ENCODE measurements at regions of chr6 and their contacts with region 1.

Region 1: GRCh38 chr6:26401987-26402658 is at the start of gene BTN3A1:
- DNase-seq: peak; percentile 39 to 80
- H3K4me3 ChIP-seq: peak within 1 kb of the TSS; percentile 64 to 71
- H3K27ac ChIP-seq: peak within 1 kb of the TSS; percentile 71 to 82
- H3K4me1 ChIP-seq: peaks cover 0 to 7% of the 10 kb centered on the region in 2 donors
- H3K27me3 ChIP-seq: no peaks in the 10 kb centered on the region
- CTCF ChIP-seq: no peak
- total RNA-seq, gene BTN3A1: 7.7 TPM

Region 2: DNA sequence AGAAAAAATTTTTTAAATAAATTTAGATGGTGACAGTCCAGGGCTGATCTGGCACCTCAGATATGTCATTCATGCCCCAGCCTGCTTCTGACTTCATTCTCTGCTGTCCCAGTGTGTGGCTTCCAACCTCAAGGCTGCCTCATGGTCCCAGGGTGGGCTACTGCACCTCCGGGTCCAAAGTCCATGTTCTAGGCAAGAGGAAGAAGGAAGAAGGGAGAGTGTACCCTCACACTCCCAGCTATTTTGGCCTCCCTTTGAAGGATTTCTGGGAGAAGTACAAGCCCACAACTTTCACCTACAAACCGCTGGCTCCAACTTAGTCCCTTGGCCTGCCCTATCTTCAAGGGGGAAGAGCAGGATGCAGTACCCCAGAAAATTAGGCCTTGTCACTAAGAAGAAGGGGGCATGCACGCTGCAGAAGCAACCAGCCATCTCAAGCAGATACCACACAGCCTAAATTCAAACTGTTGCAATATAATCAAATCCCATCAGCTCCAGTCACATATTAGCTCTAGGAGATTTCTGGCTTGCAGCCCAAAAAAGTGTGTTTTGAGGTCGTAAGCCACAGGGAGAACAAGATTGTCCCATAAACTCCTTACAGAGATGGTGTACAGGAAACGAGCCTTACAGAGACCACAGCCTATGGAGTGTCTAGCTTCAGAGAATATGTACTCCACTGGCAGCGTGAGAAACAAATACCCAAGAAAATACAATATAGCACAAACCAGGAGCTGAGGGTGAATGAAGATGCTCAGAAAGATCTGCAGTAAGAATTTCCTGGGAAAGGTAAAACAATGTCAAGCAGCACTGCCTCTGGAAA is 38.0 kb before region 1 on chr6:
- intact Hi-C with region 1: loop called (anchors 1 kb)
- DNase-seq: no peak
- H3K4me3 ChIP-seq: peak overlapping the region; percentile 72 to 79
- H3K27ac ChIP-seq: peak overlapping the region; percentile 64 to 83
- H3K4me1 ChIP-seq: peaks cover 0 to 8% of the 10 kb centered on the region in 2 donors
- H3K27me3 ChIP-seq: no peaks in the 10 kb centered on the region
- CTCF ChIP-seq: no peak

Region 3: DNA sequence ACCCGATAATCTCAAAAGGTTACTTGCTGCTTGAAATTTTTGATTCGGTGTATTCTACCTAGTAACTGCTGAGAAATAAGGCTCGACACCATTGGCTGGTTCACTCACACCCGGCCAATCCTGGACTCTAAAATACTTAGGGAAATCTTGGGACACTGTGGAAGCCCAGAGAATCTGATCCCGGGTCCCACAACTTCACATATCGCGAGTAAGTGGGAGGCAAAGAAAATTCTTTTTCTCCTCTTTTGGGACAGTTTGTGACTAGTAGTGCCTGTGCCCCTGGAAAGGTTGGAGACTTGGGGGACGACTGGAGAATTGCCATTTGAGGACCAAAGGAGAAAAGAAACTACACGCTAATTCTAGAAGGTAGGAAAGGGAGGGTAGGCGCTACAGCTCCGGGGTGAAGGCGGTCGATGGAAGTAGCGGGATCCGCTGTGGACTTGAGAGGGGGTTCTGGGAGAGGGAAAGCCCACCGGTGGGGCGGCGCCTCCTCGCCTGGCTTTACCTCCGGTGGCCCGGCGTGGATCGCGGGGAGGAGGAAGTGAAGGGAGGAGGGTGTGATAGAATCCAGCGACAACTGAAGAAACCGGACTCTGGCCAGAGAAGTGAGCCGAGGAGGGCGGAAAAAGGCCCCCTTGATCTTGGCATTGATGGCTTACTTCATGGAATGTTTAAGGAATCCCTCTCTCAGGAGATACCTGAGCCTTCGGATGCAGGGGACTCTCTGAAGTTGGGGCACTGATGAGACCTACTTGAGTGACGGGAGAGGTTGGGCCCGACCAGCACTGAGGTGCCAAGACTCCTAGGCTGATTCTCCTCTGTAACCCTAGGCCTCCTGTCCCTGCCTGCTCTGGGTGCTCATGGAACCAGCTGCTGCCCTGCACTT is 19.4 kb after region 1 on chr6:
- intact Hi-C with region 1: loop called (anchors 2 kb)
- DNase-seq: peak; percentile 38 to 87
- H3K4me3 ChIP-seq: peak overlapping the region; percentile 52 to 97
- H3K27ac ChIP-seq: peak overlapping the region; percentile 75 to 95
- H3K4me1 ChIP-seq: peaks cover 5 to 35% of the 10 kb centered on the region in 2 donors
- H3K27me3 ChIP-seq: no peaks in the 10 kb centered on the region
- CTCF ChIP-seq: no peak

Region 4: DNA sequence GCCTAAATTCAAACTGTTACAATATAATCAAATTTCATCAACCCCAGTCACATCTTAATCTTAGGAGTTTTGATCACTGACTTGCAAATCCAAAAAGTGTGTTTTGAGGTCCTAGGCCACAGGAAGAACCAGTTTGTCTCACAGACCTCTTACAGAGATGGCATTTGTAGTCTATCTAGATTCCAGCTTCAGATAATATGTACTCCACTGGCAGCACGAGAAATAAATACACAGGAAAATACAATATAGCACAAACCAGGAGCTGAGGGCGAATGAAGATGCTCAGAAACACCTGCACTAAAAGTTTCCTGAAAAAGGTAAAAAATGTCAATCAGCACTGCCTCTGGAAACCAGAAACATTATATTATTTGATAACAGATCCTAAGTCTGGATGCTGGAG is 37.5 kb after region 1 on chr6:
- intact Hi-C with region 1: loop called (anchors 5 kb)
- DNase-seq: no peak
- H3K4me3 ChIP-seq: peak overlapping the region; percentile 60 to 63
- H3K27ac ChIP-seq: peak overlapping the region in 1 of 2 donors; percentile 67
- H3K4me1 ChIP-seq: peaks cover 0 to 10% of the 10 kb centered on the region in 2 donors
- H3K27me3 ChIP-seq: no peaks in the 10 kb centered on the region
- CTCF ChIP-seq: no peak

Region 5: DNA sequence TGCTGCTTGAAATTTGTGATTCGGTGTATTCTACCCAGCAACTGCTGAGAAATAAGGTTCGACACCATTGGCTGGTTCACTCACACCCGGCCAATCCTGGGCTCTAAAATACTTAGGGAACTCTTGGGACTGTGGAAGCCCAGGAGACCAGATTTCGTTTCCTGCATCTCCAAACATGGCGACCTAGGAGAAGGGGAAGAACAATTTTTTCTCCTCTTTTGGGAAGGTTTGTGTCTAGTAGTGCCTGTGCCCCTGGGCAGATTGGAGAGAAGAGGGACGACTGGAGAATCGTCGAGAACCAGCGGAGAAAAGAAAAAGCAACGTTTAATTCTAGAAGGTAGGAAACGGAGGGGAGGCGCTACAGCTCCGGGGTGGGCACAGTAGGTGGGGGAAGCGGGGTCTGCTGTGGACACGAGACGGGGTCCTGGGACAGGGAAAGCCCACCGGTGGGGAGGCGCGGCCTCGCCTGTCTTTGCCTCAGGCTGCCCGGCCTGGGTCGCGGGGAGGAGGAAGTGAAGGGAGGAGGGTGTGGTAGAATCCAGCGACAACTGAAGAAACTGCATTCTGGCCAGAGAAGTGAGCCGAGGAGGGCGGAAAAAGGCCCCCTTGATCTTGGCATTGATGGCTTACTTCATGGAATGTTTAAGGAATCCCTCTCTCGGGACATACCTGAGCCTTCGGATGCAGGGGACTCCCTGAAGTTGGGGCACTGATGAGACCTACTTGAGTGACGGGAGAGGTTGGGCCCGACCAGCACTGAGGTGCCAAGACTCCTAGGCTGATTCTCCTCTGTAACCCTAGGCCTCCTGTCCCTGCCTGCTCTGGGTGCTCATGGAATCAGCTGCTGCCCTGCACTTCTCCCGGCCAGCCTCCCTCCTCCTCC is 55.9 kb after region 1 on chr6 and contains the start of gene BTN2A1:
- intact Hi-C with region 1: loop called (anchors 1 kb)
- DNase-seq: peak; percentile 53 to 92
- H3K4me3 ChIP-seq: peak within 1 kb of the TSS; percentile 56 to 91
- H3K27ac ChIP-seq: peak within 1 kb of the TSS; percentile 82 to 96
- H3K4me1 ChIP-seq: peaks cover 14 to 37% of the 10 kb centered on the region in 2 donors
- H3K27me3 ChIP-seq: no peaks in the 10 kb centered on the region
- CTCF ChIP-seq: no peak
- total RNA-seq, gene BTN2A1: 8.3 TPM

Region 6: DNA sequence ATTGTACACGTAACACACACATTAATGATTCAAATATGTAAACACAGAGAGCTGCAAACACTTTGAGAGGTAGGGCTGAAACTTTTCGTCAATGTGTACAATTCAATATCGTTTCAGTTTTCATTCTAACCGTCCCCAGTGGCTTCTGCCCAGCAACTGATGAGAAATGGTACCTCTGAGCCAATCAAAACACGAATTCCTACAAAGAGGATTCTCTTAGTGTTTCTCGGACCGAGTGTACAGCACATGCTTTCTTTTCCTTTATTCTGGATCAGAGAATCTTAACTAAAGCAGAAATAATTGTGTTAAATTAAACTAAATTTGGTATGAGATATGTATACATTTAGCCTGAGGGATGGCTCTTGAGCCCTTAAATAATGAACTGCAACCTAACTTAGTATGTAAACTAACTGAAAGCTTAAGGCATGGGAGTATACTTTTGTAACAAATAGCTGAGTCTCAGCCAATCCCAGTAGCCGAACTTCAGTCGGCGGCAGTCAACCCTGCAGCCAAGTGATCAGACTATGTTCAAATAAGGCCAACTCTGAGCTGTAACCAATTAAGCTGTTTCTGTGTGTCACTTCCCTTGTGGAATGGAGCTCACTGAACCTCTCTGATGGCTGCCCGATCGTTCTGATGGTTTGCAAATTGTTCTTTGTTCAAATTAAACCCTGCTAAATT is 71.8 kb after region 1 on chr6:
- intact Hi-C with region 1: loop called (anchors 5 kb)
- DNase-seq: peak; percentile 68 to 92
- H3K4me3 ChIP-seq: peak overlapping the region; percentile 57 to 64
- H3K27ac ChIP-seq: peak overlapping the region; percentile 91
- H3K4me1 ChIP-seq: peaks cover 6 to 9% of the 10 kb centered on the region in 2 donors
- H3K27me3 ChIP-seq: no peaks in the 10 kb centered on the region
- CTCF ChIP-seq: no peak

Measured in ascending aorta (tissue), 2 donors.